ENCODE measurements at regions of chr3 and their contacts with region 1.

Region 1: DNA sequence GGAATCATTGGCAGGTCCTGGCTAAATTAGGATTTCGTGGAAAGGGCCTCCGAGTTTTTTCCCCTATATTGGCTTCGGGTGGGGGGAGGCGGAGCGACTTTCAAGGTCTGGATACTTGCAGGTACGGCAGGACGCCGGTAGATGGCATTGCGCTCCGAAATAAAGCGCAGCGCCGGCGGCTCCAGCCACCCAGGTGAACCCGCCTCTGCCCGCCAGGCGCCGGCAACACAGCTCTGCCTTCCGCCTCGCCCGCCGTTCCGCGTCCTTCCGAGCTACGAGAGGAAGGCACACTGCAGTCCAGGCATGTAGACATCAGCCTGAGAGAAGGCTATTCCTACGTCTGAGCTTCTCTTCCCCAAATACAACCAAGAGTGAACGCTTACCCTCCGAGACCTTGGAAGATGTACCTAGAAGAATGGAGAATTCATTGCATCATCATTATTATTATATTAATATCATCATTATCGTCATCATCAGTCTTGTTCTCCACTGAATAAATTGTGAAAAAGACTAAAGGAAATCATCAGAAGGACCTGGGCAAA is 514.1 kb downstream of the MECOM start:
- DNase-seq: peak; percentile 23 to 92
- H3K4me3 ChIP-seq: peak overlapping the region; percentile 46 to 65
- H3K27ac ChIP-seq: peak overlapping the region; percentile 72 to 90
- H3K4me1 ChIP-seq: peaks cover 0 to 7% of the 10 kb centered on the region in 2 donors
- H3K27me3 ChIP-seq: no peaks in the 10 kb centered on the region
- CTCF ChIP-seq: peak; percentile 87 to 93 (median 88)

Region 2: DNA sequence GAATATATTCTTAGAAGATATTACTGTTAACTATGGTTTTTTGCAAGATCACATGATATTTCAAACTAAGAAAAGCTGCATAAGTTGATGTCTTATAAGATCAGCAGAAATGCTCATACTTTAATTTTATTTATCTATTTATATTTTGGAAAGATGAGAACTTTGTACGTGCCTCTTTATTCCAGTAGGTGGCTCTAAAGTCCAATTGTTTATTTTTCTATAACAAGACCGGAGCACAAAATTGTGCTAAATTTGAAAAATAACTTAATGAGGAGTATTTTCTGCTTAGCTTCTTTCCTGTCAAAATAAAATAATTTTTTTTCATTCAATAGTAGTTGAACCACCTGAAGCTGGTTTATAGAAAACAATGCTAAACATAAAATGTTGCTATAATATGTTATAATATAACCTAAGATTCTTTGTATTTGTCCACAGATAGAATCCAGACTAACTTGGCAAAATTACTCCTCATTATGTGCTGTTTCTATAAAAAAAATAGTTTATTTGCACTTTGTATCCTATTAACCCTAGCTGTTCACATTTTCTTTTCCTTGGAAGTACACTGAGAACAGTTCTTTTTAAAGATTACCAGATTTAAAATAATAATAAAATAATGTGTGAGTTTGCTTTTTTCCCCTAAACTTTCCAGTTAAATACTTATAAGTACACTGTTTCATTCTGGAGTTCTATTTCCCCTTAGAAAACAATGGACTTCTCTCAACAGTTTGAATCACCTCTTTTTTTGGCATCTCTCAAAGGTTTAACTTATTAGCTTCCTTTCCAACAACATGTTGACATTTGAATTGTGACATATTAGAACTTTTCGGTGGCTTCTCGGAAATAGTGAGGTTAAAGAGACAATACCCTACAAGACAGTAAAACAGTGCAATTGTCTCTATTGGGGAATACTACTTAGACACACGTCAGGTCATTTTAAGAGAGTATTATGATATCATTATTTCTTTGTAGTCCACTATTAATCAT is 15.9 kb before region 1 on chr3:
- intact Hi-C with region 1: loop called (anchors 2 kb)
- DNase-seq: no peak
- H3K4me3 ChIP-seq: no peak overlapping the region
- H3K27ac ChIP-seq: peak overlapping the region; percentile 45 to 53
- H3K4me1 ChIP-seq: peaks cover 0 to 30% of the 10 kb centered on the region in 2 donors
- H3K27me3 ChIP-seq: no peaks in the 10 kb centered on the region
- CTCF ChIP-seq: peak; percentile 14 to 58 (median 42)

Region 3: DNA sequence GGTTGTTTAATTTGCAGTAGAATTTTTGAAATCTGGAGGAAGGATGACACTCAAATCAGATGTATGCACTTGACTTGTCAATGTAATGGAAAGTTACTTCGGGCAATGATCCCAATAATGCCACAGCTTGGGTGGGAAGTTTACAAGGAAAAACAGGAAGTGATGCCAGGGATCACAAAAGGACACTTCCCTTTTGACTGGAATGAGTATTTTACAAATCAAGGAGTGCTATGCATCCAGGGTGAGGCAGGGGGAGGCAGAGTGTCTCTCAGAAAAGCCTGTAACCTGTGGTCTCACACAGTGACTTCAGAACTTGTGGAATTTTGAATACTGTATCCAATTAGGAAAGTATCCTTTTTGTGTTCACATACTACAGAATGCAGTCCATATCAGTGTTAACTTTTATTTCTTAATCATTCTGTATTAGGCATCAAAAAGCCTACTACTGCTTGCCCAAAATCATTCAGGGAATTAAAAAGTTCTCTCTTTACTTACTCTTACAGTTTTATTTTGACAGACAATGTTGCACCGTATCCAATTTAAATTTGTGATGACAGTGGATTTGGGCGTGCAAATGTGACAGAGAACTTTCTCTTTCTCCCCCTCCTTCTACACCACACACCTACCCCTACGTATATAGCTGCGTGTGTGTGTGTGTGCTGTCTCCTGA is 69.0 kb after region 1 on chr3:
- intact Hi-C with region 1: loop called (anchors 5 kb)
- DNase-seq: peak in 1 of 2 donors; percentile 78
- H3K4me3 ChIP-seq: no peak overlapping the region
- H3K27ac ChIP-seq: peak overlapping the region in 1 of 2 donors; percentile 11
- H3K4me1 ChIP-seq: no peaks in the 10 kb centered on the region
- H3K27me3 ChIP-seq: no peaks in the 10 kb centered on the region
- CTCF ChIP-seq: peak; percentile 56 to 78 (median 73)

Region 4: GRCh38 chr3:169342652-169343505 is 193.5 kb after region 1 on chr3:
- intact Hi-C with region 1: loop called (anchors 5 kb)
- DNase-seq: no peak
- H3K4me3 ChIP-seq: no peak overlapping the region
- H3K27ac ChIP-seq: peak overlapping the region in 1 of 2 donors; percentile 26
- H3K4me1 ChIP-seq: peaks cover 0 to 9% of the 10 kb centered on the region in 2 donors
- H3K27me3 ChIP-seq: no peaks in the 10 kb centered on the region
- CTCF ChIP-seq: no peak

Region 5: GRCh38 chr3:169390271-169391230 is 241.1 kb after region 1 on chr3:
- intact Hi-C with region 1: loop called (anchors 1 kb)
- DNase-seq: no peak
- H3K4me3 ChIP-seq: no peak overlapping the region
- H3K27ac ChIP-seq: peak overlapping the region; percentile 72 to 74
- H3K4me1 ChIP-seq: peaks cover 0 to 18% of the 10 kb centered on the region in 2 donors
- H3K27me3 ChIP-seq: no peaks in the 10 kb centered on the region
- CTCF ChIP-seq: peak in 1 of 3 experiments; percentile 48

Region 6: DNA sequence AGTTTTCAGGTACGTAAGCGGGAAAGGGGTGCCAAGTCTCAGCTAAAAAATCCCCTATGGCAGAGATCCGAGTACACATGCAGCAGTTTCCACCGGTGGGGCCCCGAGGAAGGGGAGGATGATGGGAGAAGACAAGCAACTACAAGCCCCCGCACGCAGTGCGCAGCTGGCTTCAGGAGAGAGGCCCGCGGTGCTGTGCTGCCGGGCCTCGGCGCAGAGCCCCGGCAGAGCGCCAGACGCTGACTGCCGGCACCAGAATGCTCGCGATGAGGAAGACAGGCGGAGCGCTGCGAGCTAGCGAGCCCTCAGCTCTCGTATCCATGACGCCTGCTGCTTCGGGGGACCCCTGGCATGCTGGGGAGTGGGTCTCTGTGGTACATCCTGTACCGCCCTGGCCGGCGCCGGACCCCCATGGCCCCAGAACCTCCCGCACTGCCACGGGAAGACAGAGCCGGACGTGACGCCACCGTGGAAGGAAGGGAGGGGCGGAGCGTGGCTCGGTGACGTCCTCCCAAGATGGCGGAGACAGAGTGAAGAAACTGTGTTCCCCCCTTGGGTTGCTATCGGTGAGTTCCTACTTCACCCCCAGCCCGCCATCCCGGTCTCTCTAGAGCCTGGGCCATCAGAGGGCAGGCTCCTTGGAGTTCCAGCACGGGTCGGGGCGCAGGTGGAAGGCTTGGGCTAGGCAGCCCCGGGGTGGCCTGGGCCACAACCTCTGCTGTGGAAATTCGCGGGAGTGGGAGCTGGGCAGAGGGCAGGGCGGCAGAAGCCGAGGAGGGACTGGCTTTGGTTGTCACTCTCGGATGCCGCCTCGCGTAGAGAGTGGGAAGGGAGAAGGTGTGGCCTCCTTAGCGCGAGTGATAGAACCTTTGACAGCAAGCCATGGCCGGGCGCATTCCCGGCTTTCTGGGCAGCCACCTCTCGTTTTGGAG is 623.7 kb after region 1 on chr3 and contains the start of gene MYNN:
- intact Hi-C with region 1: loop called (anchors 2 kb)
- DNase-seq: peak; percentile 74 to 96
- H3K4me3 ChIP-seq: peak within 1 kb of the TSS; percentile 75 to 78
- H3K27ac ChIP-seq: peak within 1 kb of the TSS; percentile 96 to 97
- H3K4me1 ChIP-seq: peaks cover 7 to 14% of the 10 kb centered on the region in 2 donors
- H3K27me3 ChIP-seq: no peaks in the 10 kb centered on the region
- CTCF ChIP-seq: peak in 1 of 3 experiments; percentile 11
- total RNA-seq, gene MYNN: 3.9 TPM